ENCODE measurements at regions of chr15 and their contacts with region 1.

Region 1: DNA sequence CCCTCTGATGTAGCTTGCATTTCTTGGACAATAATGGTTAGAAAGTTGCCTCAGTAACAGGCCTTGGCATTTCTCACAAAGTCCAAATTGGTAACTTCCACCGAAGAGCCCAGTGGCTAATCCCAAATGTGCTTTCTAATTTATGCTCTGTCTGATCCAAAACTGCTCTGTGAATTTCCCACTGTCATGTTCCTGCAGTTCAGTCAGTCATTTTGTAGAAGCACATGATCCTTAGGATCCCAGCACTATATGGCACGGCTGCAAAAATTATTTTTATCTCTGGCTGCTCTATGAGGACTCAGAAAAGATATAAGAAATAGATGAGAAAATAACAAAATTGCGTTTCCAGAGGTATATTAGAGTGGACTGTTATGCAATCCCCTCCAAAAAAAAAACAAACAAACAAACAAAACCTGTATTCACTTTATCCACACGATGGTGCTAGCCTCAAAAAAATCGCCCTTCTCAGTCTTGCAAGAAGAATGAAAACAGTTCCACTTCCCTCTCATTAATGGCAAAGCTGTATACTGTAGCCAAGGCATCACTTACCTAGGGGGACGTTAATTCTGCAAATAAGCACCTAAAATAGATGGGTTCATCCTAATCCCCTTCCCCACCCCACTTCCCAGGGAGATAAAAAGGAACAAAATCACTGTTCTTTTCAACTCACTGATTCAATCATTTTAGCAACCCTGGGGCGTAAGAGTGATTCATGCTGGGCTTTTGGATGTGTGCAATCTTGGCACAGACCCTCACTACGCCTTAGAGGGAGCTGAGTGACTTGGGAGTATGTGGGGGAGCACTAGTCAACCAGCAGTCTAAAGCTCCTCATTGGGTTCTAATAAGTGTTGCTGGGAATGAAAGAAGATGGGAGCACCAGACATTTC is 61.3 kb downstream of the TMCO5A start:
- DNase-seq: peak; percentile 69
- H3K4me3 ChIP-seq: no peak overlapping the region
- H3K27ac ChIP-seq: no peak overlapping the region
- H3K4me1 ChIP-seq: no peaks in the 10 kb centered on the region
- H3K27me3 ChIP-seq: peaks cover 10% of the 10 kb centered on the region
- CTCF ChIP-seq: peak; percentile 73

Region 2: GRCh38 chr15:37973856-37974255 is 21.8 kb before region 1 on chr15:
- CTCF ChIA-PET with region 1: no interaction called
- POLR2A ChIA-PET with region 1: no interaction called
- intact Hi-C with region 1: no loop called
- DNase-seq: no peak
- H3K4me3 ChIP-seq: no peak overlapping the region
- H3K27ac ChIP-seq: no peak overlapping the region
- H3K4me1 ChIP-seq: no peaks in the 10 kb centered on the region
- H3K27me3 ChIP-seq: no peaks in the 10 kb centered on the region
- CTCF ChIP-seq: no peak

Region 3: DNA sequence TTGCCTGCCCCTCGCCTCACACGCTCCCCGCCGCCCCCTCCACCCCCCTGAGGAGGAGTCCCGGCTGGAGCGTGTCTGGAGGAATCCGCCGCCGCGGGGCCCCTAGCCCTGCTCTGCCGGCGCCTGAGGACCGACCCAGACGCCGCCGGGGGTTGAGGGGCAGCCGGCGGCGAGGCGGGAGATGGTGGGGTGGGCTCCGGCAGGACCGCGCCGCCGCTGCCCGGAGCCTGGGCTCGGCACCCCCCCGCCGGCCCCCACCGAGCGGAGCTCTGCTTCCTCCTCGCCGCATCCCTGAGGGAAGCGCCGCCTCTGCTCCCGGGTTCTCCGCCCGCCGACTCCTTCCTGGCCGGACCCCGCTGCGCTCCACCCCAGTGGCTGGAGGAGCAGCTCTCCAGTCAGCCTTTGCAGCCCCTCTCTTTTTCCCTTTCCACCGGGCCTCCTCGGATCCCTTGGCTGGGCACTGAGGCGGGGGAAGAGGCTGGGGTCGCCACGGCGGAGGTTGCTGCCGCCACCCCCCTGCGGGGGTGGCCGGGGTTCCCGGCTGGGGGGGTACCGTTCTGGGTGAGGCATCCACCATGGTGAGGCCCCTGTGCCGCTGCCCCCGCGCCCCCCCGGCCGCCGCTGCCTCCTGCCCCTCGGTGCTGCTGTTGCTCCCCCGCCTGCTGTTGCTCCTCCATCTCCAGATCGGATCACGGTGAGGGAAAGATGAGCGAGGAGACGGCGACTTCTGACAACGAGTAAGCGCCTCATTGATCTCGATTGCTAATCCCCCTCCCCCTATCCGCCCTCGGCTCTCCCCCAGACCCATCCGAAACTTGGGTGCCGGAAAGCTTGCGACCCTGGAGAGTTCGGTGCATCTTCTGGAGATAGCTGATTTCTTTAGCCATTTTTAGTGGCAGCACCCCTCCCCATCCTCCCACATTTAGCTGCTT is 257.0 kb after region 1 on chr15 and contains the start of gene SPRED1:
- CTCF ChIA-PET with region 1: interaction called, 3 read pairs
- POLR2A ChIA-PET with region 1: no interaction called
- intact Hi-C with region 1: loop called (anchors 5 kb)
- DNase-seq: peak; percentile 81
- H3K4me3 ChIP-seq: peak within 1 kb of the TSS; percentile 91
- H3K27ac ChIP-seq: peak within 1 kb of the TSS; percentile 98
- H3K4me1 ChIP-seq: peaks cover 34% of the 10 kb centered on the region
- H3K27me3 ChIP-seq: peaks cover 6% of the 10 kb centered on the region
- CTCF ChIP-seq: no peak
- total RNA-seq, gene SPRED1: 14.2 and 17.3 TPM in 2 replicates

Region 4: GRCh38 chr15:38389924-38390542 is 394.3 kb after region 1 on chr15:
- CTCF ChIA-PET with region 1: interaction called, 7 read pairs
- POLR2A ChIA-PET with region 1: no interaction called
- intact Hi-C with region 1: loop called (anchors 2 kb)
- DNase-seq: peak; percentile 62
- H3K4me3 ChIP-seq: no peak overlapping the region
- H3K27ac ChIP-seq: no peak overlapping the region
- H3K4me1 ChIP-seq: no peaks in the 10 kb centered on the region
- H3K27me3 ChIP-seq: peaks cover 27% of the 10 kb centered on the region
- CTCF ChIP-seq: peak; percentile 89

Region 5: DNA sequence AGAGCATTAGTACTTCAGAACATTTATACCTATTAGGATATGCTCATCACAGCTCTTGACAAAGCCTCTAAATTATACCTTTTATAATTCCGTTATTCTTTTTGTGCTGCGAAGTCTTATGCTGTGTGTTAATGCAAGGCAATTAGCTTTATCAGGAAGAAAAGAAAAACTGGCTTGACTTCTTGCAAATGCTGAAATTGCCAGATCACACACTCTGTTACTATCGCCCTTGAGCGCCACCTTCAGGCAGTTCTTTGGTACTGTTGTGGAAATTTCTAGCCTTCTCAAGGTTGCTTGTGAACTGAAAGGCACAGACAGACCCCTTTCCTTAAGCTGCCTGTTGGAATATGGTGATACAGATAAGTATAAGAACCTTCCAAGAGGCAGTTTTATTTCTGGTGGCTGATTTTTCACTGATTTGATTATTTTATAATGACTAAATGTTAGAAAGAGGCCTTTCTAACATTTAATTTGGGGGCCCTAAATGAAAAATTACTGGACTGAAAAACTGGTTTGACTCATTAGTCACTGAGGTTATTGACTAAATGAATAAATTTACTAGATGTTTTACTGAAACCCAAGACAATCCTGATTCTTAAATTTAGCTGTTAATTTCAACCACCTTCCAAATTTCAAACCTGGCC is 695.1 kb after region 1 on chr15:
- CTCF ChIA-PET with region 1: no interaction called
- POLR2A ChIA-PET with region 1: no interaction called
- intact Hi-C with region 1: loop called (anchors 5 kb)
- DNase-seq: peak; percentile 77
- H3K4me3 ChIP-seq: no peak overlapping the region
- H3K27ac ChIP-seq: no peak overlapping the region
- H3K4me1 ChIP-seq: no peaks in the 10 kb centered on the region
- H3K27me3 ChIP-seq: no peaks in the 10 kb centered on the region
- CTCF ChIP-seq: peak; percentile 83